MCF 10A (cell line): ENCODE measurements at regions of chr16 and their contacts with region 1.

Region 1: GRCh38 chr16:2474877-2475412 is at the start of gene TBC1D24:
- DNase-seq: peak; percentile 79
- H3K4me3 Mint-ChIP-seq: peak within 1 kb of the TSS; percentile 74
- H3K27ac Mint-ChIP-seq: peak within 1 kb of the TSS; percentile 35
- H3K4me1 Mint-ChIP-seq: peaks cover 16% of the 10 kb centered on the region
- H3K27me3 Mint-ChIP-seq: no peaks in the 10 kb centered on the region
- CTCF ChIP-seq: no peak
- total RNA-seq, gene TBC1D24: 7.6 and 8.1 TPM in 2 replicates

Region 2: DNA sequence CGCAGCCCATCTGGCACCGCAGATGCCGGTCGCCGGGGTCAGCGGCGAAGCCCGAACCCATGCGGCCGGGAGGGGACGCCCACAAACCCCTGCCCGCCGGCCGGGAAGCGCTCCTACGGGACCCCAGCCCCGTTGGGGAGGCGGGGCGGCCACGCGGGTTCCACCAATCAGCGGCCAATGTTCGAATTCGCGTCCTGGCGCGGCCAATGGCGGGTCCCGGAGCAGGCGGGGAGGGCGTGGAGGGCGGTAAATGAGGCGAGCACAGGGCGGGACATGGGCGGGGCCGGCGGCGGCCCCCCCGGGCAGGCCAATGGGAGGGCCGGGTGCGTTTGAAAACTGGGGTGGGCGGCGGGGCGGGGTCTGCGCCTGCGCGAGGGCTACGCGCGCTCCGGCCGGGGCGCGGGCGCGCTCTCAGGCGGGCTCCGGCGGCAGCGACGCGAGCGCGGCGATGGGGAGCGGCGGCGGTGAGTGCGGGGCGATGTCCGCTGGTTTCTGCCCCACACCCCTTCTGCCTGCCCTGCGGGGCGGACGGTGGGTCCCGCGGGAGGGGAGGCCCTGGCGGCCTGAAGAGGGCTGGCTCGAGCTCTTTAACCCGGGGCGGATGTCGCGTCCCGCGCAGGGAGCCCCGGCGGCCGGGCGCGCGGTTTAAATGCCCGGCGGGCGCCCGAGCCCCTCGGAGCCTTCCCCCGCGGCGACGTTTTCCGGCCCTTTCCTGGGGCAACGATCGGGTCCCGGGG is 45.7 kb before region 1 on chr16 and contains the start of gene CCNF:
- CTCF ChIA-PET with region 1: interaction called, 7 read pairs
- POLR2A ChIA-PET with region 1: interaction called, 10 read pairs
- intact Hi-C with region 1: no loop called
- DNase-seq: peak; percentile 94
- H3K4me3 Mint-ChIP-seq: peak within 1 kb of the TSS; percentile 86
- H3K27ac Mint-ChIP-seq: peak within 1 kb of the TSS; percentile 16
- H3K4me1 Mint-ChIP-seq: peaks cover 20% of the 10 kb centered on the region
- H3K27me3 Mint-ChIP-seq: no peaks in the 10 kb centered on the region
- CTCF ChIP-seq: no peak
- total RNA-seq, gene CCNF: 7.5 and 11.9 TPM in 2 replicates

Region 3: DNA sequence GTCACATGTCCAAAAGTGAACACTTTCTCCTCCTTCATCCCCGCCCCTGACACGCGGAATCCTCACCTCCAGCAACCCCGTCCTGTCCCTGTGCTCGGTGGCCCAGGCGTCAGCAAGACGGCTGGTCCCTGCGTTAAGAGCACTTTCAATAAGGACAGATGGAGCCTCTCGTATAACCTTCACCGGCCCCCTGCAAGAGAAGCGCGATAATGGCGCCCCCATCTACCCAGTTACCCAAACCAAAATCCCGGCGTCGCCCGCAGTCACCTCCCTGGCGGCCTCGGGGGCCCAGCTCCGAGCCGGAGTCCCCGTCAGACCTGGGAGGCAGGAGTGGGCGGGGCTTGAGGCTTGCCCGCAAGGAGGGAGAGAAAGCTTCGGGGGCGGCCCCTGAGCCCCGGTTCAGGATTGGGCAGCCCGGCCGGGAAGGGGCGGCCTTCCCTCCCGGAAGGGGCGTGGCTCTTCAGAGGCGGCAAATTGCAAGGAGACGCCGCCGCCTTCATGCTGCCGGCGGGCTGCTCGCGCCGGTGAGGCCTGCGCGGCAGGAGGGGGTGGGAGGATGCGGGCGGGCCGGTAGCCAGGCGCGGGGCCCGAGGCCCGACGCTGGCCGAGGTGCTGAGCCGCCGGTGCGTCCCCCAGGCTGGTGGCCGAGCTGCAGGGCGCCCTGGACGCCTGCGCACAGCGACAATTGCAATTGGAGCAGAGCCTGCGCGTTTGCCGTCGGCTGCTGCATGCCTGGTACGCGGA is 15.1 kb before region 1 on chr16 and contains the start of gene TEDC2:
- CTCF ChIA-PET with region 1: interaction called, 3 read pairs
- POLR2A ChIA-PET with region 1: interaction called, 11 read pairs
- intact Hi-C with region 1: no loop called
- DNase-seq: peak; percentile 96
- H3K4me3 Mint-ChIP-seq: peak within 1 kb of the TSS; percentile 77
- H3K27ac Mint-ChIP-seq: peak within 1 kb of the TSS; percentile 82
- H3K4me1 Mint-ChIP-seq: peaks cover 7% of the 10 kb centered on the region
- H3K27me3 Mint-ChIP-seq: no peaks in the 10 kb centered on the region
- CTCF ChIP-seq: no peak
- total RNA-seq, gene TEDC2: 3.5 and 6.9 TPM in 2 replicates

Region 4: GRCh38 chr16:2513405-2514322 is 38.7 kb after region 1 on chr16 and contains the start of gene ATP6V0C:
- CTCF ChIA-PET with region 1: interaction called, 5 read pairs
- POLR2A ChIA-PET with region 1: interaction called, 9 read pairs
- intact Hi-C with region 1: loop called (anchors 2 kb)
- DNase-seq: peak; percentile 88
- H3K4me3 Mint-ChIP-seq: peak within 1 kb of the TSS; percentile 87
- H3K27ac Mint-ChIP-seq: peak within 1 kb of the TSS; percentile 94
- H3K4me1 Mint-ChIP-seq: peaks cover 29% of the 10 kb centered on the region
- H3K27me3 Mint-ChIP-seq: no peaks in the 10 kb centered on the region
- CTCF ChIP-seq: no peak
- total RNA-seq, gene ATP6V0C: 173 and 198 TPM in 2 replicates